Ovary (tissue), 10 donors: ENCODE measurements at regions of chr4 and their contacts with region 1.

Region 1: GRCh38 chr4:39365830-39366771 is at the start of gene RFC1:
- DNase-seq: peak; percentile 87 to 95 (median 93)
- H3K4me3 ChIP-seq: peak within 1 kb of the TSS; percentile 80
- H3K27ac ChIP-seq: peak within 1 kb of the TSS; percentile 77 to 81
- H3K4me1 ChIP-seq: peaks cover 1% of the 10 kb centered on the region
- H3K27me3 ChIP-seq: no peaks in the 10 kb centered on the region
- CTCF ChIP-seq: no peak
- EP300 ChIP-seq: peak; percentile 36
- POLR2A ChIP-seq: peak; percentile 41
- total RNA-seq, gene RFC1: 27.4 to 54.1 (median 42.2) TPM

Region 2: DNA sequence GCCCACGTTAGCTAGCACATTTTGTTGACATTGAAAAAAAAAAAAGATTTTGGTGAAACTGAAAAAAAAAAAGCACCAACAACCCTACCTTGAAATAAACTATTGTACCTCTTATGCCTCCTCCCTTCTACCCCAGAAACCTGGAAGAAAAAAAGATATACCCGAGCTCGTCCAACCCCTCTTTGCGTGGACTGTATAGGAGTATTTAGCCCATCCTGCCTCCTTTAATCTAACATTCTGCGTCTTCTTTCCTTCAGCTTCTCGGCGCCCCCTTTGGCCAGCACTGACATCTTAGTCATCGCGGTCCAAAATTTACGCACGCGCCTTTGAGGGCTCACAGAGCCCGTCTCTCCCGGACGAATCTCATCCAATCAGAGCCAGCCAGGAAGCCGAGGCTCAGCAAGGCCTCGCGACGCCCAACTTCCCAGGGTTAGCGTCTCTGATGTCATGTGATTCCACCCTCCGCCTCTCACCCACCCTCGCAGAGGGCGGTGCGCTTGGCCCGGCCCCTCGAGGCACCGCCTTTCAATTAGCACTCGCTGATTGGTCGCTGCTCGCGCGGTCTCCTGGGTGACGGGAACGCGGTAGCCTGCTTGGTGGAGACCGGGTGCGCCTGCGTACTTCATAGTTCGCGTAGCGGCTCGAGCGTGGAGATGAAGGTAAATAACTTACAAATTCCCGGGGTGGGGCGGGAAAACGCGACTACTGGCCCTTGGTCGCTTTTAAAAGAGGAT is 184.0 kb before region 1 on chr4 and contains the start of gene WDR19:
- intact Hi-C with region 1: loop called in 1 of 4 experiments (anchors 5 kb)
- DNase-seq: peak; percentile 98 to 99 (median 98)
- H3K4me3 ChIP-seq: peak within 1 kb of the TSS; percentile 73
- H3K27ac ChIP-seq: peak within 1 kb of the TSS in 1 of 2 donors; percentile 59
- H3K4me1 ChIP-seq: peaks cover 2% of the 10 kb centered on the region
- H3K27me3 ChIP-seq: no peaks in the 10 kb centered on the region
- CTCF ChIP-seq: peak; percentile 17 to 58 (median 53)
- EP300 ChIP-seq: no peak
- POLR2A ChIP-seq: peak; percentile 35
- total RNA-seq, gene WDR19: 35.4 to 71.0 (median 64.1) TPM

Region 3: GRCh38 chr4:39319678-39320077 is 46.4 kb before region 1 on chr4:
- intact Hi-C with region 1: no loop called
- DNase-seq: no peak
- H3K4me3 ChIP-seq: no peak overlapping the region
- H3K27ac ChIP-seq: no peak overlapping the region
- H3K4me1 ChIP-seq: no peaks in the 10 kb centered on the region
- H3K27me3 ChIP-seq: no peaks in the 10 kb centered on the region
- CTCF ChIP-seq: no peak
- EP300 ChIP-seq: no peak
- POLR2A ChIP-seq: no peak